RWPE1 (cell line): ENCODE measurements at regions of chr6 and their contacts with region 1.

Region 1: GRCh38 chr6:157314705-157315321 is 8.5 kb downstream of the TMEM242 start:
- DNase-seq: peak; percentile 72
- H3K27ac ChIP-seq: no peak overlapping the region
- CTCF ChIP-seq: peak; percentile 93

Region 2: GRCh38 chr6:157211603-157212455 is 103.0 kb before region 1 on chr6:
- CTCF ChIA-PET with region 1: no interaction called
- POLR2A ChIA-PET with region 1: no interaction called
- DNase-seq: no peak
- H3K27ac ChIP-seq: no peak overlapping the region
- CTCF ChIP-seq: no peak

Region 3: DNA sequence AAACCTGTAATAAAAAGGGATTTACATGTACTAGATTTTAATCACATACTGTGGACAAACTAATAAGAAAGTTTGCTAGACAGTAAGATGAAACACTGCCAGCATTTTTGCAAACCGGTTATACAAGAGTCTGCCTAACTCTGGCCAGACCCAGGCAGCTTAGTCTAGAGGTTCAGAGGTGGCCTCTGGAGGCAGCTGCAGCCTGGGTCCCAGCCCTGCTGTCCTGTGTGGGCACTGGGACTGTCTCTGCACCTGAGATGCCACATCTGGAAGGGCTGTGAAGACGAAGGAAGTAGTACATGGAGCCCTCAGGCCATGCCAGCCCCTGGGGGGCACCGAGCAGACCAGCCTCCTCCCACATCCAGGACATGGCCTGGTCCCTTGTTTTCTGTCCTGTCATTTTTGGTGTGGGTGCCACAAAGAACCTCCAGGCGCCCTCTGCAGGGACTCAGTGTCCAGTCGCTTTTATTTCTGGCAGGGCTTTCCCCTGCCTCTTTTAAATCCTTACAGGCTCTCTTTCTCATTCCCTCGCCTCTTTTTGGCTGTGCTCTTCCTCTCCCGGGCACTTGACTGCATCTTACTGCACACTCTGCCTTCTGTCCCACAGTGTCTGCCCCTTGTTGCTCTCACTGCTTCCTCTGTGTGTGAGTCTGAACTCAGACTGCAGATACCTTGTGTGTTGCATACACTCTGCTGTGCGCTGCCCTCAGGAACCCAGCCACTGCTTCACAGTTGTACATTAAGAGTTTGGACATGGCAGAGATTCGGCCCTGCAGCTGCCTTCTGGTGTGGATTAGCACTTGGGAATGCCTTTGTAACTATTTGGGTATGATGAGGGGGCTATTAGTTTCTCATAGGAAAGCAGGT is 282.9 kb after region 1 on chr6:
- CTCF ChIA-PET with region 1: interaction called, 10 read pairs
- POLR2A ChIA-PET with region 1: no interaction called
- DNase-seq: peak; percentile 39
- H3K27ac ChIP-seq: no peak overlapping the region
- CTCF ChIP-seq: peak; percentile 38

Region 4: GRCh38 chr6:157667211-157668008 is 352.6 kb after region 1 on chr6:
- CTCF ChIA-PET with region 1: interaction called, 22 read pairs
- POLR2A ChIA-PET with region 1: no interaction called
- DNase-seq: peak; percentile 77
- H3K27ac ChIP-seq: no peak overlapping the region
- CTCF ChIP-seq: peak; percentile 91